ENCODE measurements at regions of chr20 and their contacts with region 1.

Region 1: GRCh38 chr20:12925214-12925755 is 83.5 kb upstream of the SPTLC3 start:
- DNase-seq: peak in 1 of 2 donors; percentile 52
- ATAC-seq: peak; percentile 83
- H3K4me3 ChIP-seq: peak overlapping the region in 1 of 2 donors; percentile 13
- H3K27ac ChIP-seq: no peak overlapping the region
- H3K4me1 ChIP-seq: no peaks in the 10 kb centered on the region
- H3K27me3 ChIP-seq: no peaks in the 10 kb centered on the region

Region 2: GRCh38 chr20:12970372-12970821 is 45.1 kb after region 1 on chr20:
- intact Hi-C with region 1: loop called in 1 of 2 experiments (anchors 5 kb)
- DNase-seq: no peak
- ATAC-seq: peak; percentile 68
- H3K4me3 ChIP-seq: no peak overlapping the region
- H3K27ac ChIP-seq: no peak overlapping the region
- H3K4me1 ChIP-seq: no peaks in the 10 kb centered on the region
- H3K27me3 ChIP-seq: no peaks in the 10 kb centered on the region

Region 3: GRCh38 chr20:12984069-12984765 is 58.9 kb after region 1 on chr20:
- intact Hi-C with region 1: no loop called
- DNase-seq: no peak
- ATAC-seq: no peak
- H3K4me3 ChIP-seq: no peak overlapping the region
- H3K27ac ChIP-seq: no peak overlapping the region
- H3K4me1 ChIP-seq: no peaks in the 10 kb centered on the region
- H3K27me3 ChIP-seq: no peaks in the 10 kb centered on the region

Region 4: GRCh38 chr20:13105864-13106457 is 180.7 kb after region 1 on chr20:
- intact Hi-C with region 1: loop called (anchors 5 kb)
- DNase-seq: no peak
- ATAC-seq: no peak
- H3K4me3 ChIP-seq: no peak overlapping the region
- H3K27ac ChIP-seq: no peak overlapping the region
- H3K4me1 ChIP-seq: no peaks in the 10 kb centered on the region
- H3K27me3 ChIP-seq: no peaks in the 10 kb centered on the region

Measured in aorta (tissue), 5 donors.